Endothelial cell of umbilical vein (primary cell): ENCODE measurements at regions of chr1 and their contacts with region 1.

Region 1: DNA sequence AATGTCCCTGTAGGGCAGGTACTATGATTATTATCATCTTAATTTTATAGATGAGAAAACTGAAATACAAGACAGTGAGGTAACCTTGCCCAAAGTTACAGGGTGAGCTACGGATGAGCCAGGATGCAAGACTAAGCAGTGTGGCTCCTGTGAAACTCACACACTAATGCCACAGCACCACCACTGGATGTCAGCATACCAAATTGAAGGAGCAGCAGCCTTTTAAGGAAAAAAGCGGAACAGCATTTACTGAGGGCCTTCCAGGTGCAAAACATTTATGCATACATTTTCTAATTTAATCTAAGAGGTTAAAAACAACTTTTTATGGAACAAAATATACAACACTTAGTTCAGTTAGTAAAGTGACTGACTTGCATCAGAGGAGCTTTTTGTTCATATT is 41.7 kb downstream of the SEC16B start:
- DNase-seq: peak; percentile 22
- H3K4me3 ChIP-seq: no peak overlapping the region
- H3K27ac ChIP-seq: peak overlapping the region; percentile 100
- H3K4me1 ChIP-seq: peaks cover 38% of the 10 kb centered on the region
- H3K27me3 ChIP-seq: no peaks in the 10 kb centered on the region
- CTCF ChIP-seq: no peak
- POLR2A ChIP-seq: no peak

Region 2: DNA sequence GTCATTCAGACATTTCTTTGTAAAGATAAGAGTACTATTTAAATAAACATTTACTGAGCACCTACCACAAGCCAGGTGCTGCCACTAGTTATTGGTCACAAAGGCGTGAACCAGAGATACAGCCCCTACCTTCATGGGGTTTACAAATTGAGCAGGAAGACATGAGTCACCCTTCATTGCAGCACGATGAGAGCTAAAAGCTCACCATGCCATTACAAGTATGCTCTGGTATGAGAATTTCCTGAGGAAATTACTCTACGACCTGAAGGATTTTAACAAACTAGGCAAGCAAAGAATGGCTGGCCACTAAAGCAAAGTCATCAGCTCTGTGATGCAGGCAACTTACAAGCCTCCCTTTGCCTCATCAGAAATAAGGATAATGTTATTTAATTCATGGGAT is 410.6 kb before region 1 on chr1:
- CTCF ChIA-PET with region 1: no interaction called
- POLR2A ChIA-PET with region 1: no interaction called
- dilution Hi-C with region 1: no loop called
- intact Hi-C with region 1: loop called (anchors 5 kb)
- DNase-seq: peak; percentile 70
- H3K4me3 ChIP-seq: no peak overlapping the region
- H3K27ac ChIP-seq: no peak overlapping the region
- H3K4me1 ChIP-seq: peaks cover 6% of the 10 kb centered on the region
- H3K27me3 ChIP-seq: no peaks in the 10 kb centered on the region
- CTCF ChIP-seq: no peak
- POLR2A ChIP-seq: no peak

Region 3: DNA sequence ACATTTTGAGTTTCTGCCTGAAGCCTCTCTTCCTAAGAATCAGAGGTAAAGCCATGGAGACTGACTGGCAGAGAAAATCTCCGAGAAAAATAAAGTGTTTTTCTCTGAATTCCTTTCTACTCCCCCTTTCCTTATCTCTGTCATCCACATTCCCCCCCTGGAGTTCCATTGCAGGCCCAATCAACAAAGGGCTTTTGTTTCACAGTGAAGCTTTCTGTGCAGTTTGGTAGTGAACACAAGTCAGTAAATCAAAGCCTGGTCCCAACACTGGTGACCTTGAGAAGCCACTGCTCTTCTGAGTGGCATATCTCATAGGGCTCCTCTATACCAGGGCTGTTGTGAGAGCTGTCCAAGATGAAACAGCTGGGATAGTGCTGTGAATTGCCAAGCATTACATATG is 186.7 kb before region 1 on chr1:
- CTCF ChIA-PET with region 1: no interaction called
- POLR2A ChIA-PET with region 1: no interaction called
- dilution Hi-C with region 1: no loop called
- intact Hi-C with region 1: no loop called
- DNase-seq: no peak
- H3K4me3 ChIP-seq: no peak overlapping the region
- H3K27ac ChIP-seq: no peak overlapping the region
- H3K4me1 ChIP-seq: no peaks in the 10 kb centered on the region
- H3K27me3 ChIP-seq: no peaks in the 10 kb centered on the region
- CTCF ChIP-seq: no peak
- POLR2A ChIP-seq: no peak

Region 4: GRCh38 chr1:177780096-177780700 is 148.0 kb before region 1 on chr1:
- CTCF ChIA-PET with region 1: no interaction called
- POLR2A ChIA-PET with region 1: no interaction called
- dilution Hi-C with region 1: no loop called
- intact Hi-C with region 1: loop called (anchors 5 kb)
- DNase-seq: peak; percentile 45
- H3K4me3 ChIP-seq: no peak overlapping the region
- H3K27ac ChIP-seq: no peak overlapping the region
- H3K4me1 ChIP-seq: peaks cover 4% of the 10 kb centered on the region
- H3K27me3 ChIP-seq: no peaks in the 10 kb centered on the region
- CTCF ChIP-seq: peak in 1 of 2 donors; percentile 19
- POLR2A ChIP-seq: no peak

Region 5: GRCh38 chr1:177913762-177914540 is 14.2 kb before region 1 on chr1:
- CTCF ChIA-PET with region 1: interaction called, 11 read pairs
- POLR2A ChIA-PET with region 1: no interaction called
- dilution Hi-C with region 1: no loop called
- intact Hi-C with region 1: no loop called
- DNase-seq: peak; percentile 29
- H3K4me3 ChIP-seq: no peak overlapping the region
- H3K27ac ChIP-seq: no peak overlapping the region
- H3K4me1 ChIP-seq: no peaks in the 10 kb centered on the region
- H3K27me3 ChIP-seq: peaks cover 3 to 4% of the 10 kb centered on the region in 2 experiments
- CTCF ChIP-seq: peak; percentile 26 to 35
- POLR2A ChIP-seq: no peak